CD8-positive, alpha-beta T cell (primary cell): ENCODE measurements at regions of chr12 and their contacts with region 1.

Region 1: GRCh38 chr12:3135522-3136461 is 58.6 kb downstream of the TSPAN9 start:
- DNase-seq: peak in 7 of 9 experiments; percentile 3 to 72 (median 34)
- ATAC-seq: peak; percentile 49
- H3K4me3 ChIP-seq: no peak overlapping the region
- H3K4me3 Mint-ChIP-seq: no peak overlapping the region
- H3K27ac ChIP-seq: no peak overlapping the region
- H3K27ac Mint-ChIP-seq: no peak overlapping the region
- H3K4me1 ChIP-seq: no peaks in the 10 kb centered on the region
- H3K4me1 Mint-ChIP-seq: peaks cover 3% of the 10 kb centered on the region
- H3K27me3 ChIP-seq: peaks cover 3 to 5% of the 10 kb centered on the region in 2 experiments
- H3K27me3 Mint-ChIP-seq: peaks cover 50% of the 10 kb centered on the region
- CTCF ChIP-seq: peak; percentile 78

Region 2: DNA sequence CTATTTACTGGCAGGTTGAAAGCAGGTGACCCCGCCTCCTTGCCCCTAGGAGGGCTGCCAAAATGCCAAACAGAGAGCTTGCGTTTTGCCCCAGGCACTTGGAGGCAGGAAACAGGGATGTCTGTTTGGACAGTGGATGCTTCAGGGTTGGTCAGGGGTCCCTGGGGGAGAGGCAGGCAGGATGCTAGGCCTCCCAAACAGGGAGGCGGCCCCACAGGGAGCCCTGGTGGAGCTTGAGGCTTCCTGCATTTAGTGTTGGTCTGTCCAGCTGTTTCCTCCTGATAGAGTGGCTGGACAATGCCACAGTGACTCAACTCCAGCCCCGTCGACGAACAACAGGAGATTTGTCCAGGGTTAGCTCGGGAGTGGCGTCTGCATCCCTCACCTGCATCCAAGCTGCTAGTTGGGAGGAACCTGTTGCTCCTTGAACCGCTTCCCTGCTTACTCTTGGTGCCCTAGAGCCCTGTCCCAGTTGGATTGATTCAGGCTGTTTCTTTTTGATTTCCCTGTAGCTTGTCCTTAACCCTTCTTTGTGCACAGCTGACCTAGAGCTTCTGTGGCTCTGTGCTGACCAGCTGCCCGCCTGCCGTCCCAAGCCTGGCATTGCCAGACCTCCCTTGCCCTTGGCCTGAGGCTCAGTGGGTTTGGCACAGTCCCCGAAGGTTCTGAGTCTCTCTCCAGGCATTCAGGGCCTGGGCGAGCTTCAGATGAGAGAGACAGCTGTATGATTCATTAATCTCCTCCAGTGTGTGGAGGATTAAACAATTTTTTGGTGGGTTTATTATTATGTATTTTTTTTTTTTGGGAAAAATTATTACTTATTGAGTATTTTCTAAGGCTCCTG is 12.7 kb before region 1 on chr12:
- CTCF ChIA-PET with region 1: interaction called, 16 read pairs
- POLR2A ChIA-PET with region 1: no interaction called
- intact Hi-C with region 1: no loop called
- DNase-seq: no peak
- ATAC-seq: no peak
- H3K4me3 ChIP-seq: no peak overlapping the region
- H3K4me3 Mint-ChIP-seq: no peak overlapping the region
- H3K27ac ChIP-seq: no peak overlapping the region
- H3K27ac Mint-ChIP-seq: no peak overlapping the region
- H3K4me1 ChIP-seq: peaks cover 13% of the 10 kb centered on the region
- H3K4me1 Mint-ChIP-seq: peaks cover 14% of the 10 kb centered on the region
- H3K27me3 ChIP-seq: peaks cover 0 to 2% of the 10 kb centered on the region in 2 experiments
- H3K27me3 Mint-ChIP-seq: peaks cover 24% of the 10 kb centered on the region
- CTCF ChIP-seq: no peak

Region 3: DNA sequence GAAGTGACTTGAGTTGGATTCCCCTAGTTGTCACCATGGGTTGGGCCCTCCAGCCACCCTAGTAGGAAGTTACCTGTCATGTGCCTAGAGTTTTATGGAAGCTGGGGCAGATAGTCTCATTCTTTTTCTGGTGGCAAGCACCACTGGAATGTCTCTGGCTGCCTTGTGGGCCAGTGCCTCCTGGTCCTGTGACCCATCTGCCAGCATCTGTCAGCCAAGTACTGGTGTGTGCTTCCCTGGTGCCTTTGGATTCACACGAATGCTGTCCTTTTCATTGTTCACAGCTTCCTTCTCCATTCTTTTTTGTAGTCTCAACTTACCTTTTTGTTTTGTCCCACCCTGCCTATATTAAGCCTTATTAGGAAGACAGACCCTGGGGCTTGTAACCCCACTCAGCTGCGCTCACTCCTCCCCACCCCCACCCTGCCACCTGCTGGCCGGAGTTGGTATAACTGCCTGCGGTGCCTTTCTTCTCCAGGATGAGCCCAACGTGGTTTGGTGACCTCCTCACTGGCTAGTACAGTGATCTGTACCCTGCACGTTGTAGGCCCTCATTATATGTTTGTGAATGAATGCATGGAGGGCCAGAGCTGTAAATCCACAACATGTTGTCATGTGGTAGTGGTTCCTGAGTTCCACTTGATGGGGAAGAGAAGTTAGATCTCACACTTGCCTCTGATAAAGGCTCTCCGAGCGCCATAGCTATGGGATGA is 67.1 kb after region 1 on chr12:
- CTCF ChIA-PET with region 1: interaction called, 3 read pairs
- POLR2A ChIA-PET with region 1: no interaction called
- intact Hi-C with region 1: loop called (anchors 1 to 2 kb)
- DNase-seq: peak; percentile 12 to 70 (median 50)
- ATAC-seq: no peak
- H3K4me3 ChIP-seq: no peak overlapping the region
- H3K4me3 Mint-ChIP-seq: no peak overlapping the region
- H3K27ac ChIP-seq: no peak overlapping the region
- H3K27ac Mint-ChIP-seq: no peak overlapping the region
- H3K4me1 ChIP-seq: no peaks in the 10 kb centered on the region
- H3K4me1 Mint-ChIP-seq: peaks cover 6% of the 10 kb centered on the region
- H3K27me3 ChIP-seq: peaks cover 6 to 9% of the 10 kb centered on the region in 2 experiments
- H3K27me3 Mint-ChIP-seq: peaks cover 49% of the 10 kb centered on the region
- CTCF ChIP-seq: peak; percentile 83